T-cell (primary cell): ENCODE measurements at regions of chr5 and their contacts with region 1.

Region 1: DNA sequence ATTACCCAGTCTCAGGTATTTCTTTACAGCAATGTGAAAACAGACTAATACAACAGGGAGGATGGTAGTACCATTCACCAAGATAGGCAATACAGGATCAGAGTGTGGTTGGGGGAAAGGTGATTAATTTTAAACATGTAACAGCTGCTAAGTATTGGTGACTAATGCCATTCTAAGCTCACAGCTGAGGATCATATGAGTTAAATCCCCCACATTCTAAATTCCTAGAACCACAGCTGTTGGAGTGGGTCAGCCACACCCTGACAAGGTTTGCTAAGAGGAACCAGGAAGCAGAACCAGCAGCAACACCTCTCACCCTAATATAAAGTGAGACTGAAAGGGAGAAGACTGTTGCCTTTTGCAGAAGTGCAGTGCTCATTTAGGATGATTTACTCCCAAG is 24.8 kb downstream of the HSPB3 start:
- DNase-seq: no peak
- ATAC-seq: no peak
- H3K4me3 ChIP-seq: no peak overlapping the region
- H3K4me3 Mint-ChIP-seq: no peak overlapping the region
- H3K27ac ChIP-seq: no peak overlapping the region
- H3K27ac Mint-ChIP-seq: no peak overlapping the region
- H3K4me1 ChIP-seq: no peaks in the 10 kb centered on the region
- H3K4me1 Mint-ChIP-seq: no peaks in the 10 kb centered on the region
- H3K27me3 ChIP-seq: peaks cover 0 to 6% of the 10 kb centered on the region in 2 experiments
- H3K27me3 Mint-ChIP-seq: peaks cover 18 to 24% of the 10 kb centered on the region in 2 donors

Region 2: GRCh38 chr5:54895816-54896341 is 415.6 kb after region 1 on chr5:
- CTCF ChIA-PET with region 1: interaction called in 1 of 2 experiments, 11 read pairs
- POLR2A ChIA-PET with region 1: no interaction called
- DNase-seq: peak in 2 of 35 experiments; percentile 12 to 43
- ATAC-seq: peak in 1 of 4 experiments; percentile 40
- H3K4me3 ChIP-seq: no peak overlapping the region
- H3K4me3 Mint-ChIP-seq: peak overlapping the region; percentile 19 to 52 (median 34)
- H3K27ac ChIP-seq: no peak overlapping the region
- H3K27ac Mint-ChIP-seq: peak overlapping the region in 1 of 2 donors; percentile 13
- H3K4me1 ChIP-seq: no peaks in the 10 kb centered on the region
- H3K4me1 Mint-ChIP-seq: peaks cover 5 to 6% (median 5%) of the 10 kb centered on the region in 3 donors
- H3K27me3 ChIP-seq: no peaks in the 10 kb centered on the region
- H3K27me3 Mint-ChIP-seq: peaks cover 30 to 33% of the 10 kb centered on the region in 2 donors